ENCODE measurements at regions of chr12 and their contacts with region 1.

Region 1: GRCh38 chr12:49707128-49707811 is at the start of gene FMNL3:
- DNase-seq: peak; percentile 98
- ATAC-seq: peak; percentile 97
- H3K4me3 Mint-ChIP-seq: peak within 1 kb of the TSS; percentile 89
- H3K27ac Mint-ChIP-seq: peak within 1 kb of the TSS; percentile 80
- H3K4me1 Mint-ChIP-seq: peaks cover 43% of the 10 kb centered on the region
- H3K27me3 Mint-ChIP-seq: peaks cover 27% of the 10 kb centered on the region
- total RNA-seq, gene FMNL3: 44.2 to 50.5 TPM

Region 2: DNA sequence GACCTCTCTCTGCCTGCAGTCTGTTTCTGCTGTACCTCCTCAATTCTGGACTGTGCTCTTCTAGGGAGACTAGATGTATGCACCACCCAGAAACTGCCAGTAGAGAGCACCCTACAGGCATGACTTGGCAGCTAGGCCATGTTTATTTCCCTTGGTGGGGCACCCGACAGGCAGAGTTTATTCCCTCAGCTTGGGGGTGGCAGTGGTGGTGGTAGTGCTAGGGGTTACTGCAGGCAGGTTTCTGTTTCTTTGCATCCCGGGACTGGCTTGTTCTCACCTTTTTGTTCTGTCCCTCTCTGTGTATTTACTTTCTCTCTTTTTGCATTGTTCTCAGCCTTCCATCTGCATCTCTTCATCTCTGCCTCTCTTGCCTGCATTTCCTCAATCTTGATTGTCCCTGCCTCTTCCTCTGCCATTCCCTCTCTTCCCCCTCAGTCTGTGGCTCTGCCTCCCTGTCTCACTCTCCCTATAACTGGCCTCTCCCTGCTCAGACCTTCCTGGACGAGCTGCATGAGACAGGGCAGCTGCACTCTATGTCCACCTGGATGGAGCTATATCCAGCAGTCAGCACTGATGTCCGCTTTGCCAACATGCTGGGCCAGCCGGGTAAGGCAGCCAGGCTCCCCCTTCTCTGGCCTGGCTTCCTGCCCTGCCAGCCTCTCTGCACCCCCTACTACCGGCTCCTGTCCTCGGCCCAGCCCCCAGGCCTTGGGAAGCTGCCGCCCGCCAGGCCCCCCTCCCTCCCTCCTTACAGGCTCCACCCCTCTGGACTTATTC is 70.1 kb before region 1 on chr12:
- CTCF ChIA-PET with region 1: interaction called, 185 read pairs
- DNase-seq: peak; percentile 79
- ATAC-seq: peak; percentile 91
- H3K4me3 Mint-ChIP-seq: no peak overlapping the region
- H3K27ac Mint-ChIP-seq: no peak overlapping the region
- H3K4me1 Mint-ChIP-seq: peaks cover 19% of the 10 kb centered on the region
- H3K27me3 Mint-ChIP-seq: no peaks in the 10 kb centered on the region

Region 3: DNA sequence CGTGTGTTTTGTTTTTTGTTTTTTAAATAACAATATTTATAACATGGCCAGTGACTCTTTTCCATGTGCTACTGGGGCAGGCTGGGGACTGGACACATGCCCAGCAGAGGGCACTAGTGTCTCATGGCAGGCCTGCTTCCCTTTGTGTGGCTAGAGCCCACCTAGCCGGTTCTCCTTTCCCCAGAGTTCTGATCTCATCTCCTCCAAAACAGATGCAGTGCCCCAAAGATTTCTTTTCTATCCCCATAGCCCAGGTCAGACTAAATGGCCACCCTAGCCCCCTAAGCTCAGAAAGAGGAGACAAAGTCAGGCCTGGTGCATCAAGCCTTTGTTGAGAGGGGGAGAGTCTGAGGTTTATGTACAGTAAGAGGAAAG is 62.7 kb before region 1 on chr12:
- CTCF ChIA-PET with region 1: interaction called, 185 read pairs
- DNase-seq: peak; percentile 88
- ATAC-seq: peak; percentile 96
- H3K4me3 Mint-ChIP-seq: no peak overlapping the region
- H3K27ac Mint-ChIP-seq: peak overlapping the region; percentile 80
- H3K4me1 Mint-ChIP-seq: peaks cover 14% of the 10 kb centered on the region
- H3K27me3 Mint-ChIP-seq: no peaks in the 10 kb centered on the region

Region 4: DNA sequence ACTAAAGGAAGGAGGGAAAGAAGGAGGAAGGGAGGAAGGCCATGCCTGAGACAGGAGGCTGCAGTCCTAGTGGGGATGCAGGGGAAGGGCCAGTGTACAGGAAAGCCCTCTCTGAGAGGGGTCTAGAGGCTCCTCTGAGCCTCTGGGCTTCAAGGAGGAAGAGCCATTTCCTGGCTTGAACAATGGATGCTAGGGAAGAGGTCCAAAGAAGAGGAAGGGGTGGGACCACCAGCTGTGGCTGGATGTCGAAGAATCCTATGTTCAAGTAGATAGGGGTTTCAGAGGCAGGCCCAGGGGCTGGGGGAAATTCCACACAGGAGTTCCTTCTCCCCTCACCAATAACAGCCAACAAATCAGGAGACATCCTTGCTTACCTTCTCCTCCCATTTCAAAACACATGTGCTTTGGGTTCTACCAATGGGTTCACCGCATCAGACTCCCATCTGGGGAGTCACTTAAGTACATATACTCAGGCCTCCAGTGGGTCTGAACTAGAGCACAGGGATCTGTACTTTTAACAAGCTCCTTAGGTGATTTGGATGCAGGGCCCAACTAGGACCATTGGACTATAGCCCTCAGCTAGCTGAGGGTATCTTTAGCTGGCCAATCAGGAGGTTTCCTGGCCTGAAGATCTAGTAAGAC is 51.6 kb before region 1 on chr12:
- CTCF ChIA-PET with region 1: interaction called, 53 read pairs
- DNase-seq: no peak
- ATAC-seq: no peak
- H3K4me3 Mint-ChIP-seq: no peak overlapping the region
- H3K27ac Mint-ChIP-seq: no peak overlapping the region
- H3K4me1 Mint-ChIP-seq: peaks cover 8% of the 10 kb centered on the region
- H3K27me3 Mint-ChIP-seq: no peaks in the 10 kb centered on the region

Region 5: DNA sequence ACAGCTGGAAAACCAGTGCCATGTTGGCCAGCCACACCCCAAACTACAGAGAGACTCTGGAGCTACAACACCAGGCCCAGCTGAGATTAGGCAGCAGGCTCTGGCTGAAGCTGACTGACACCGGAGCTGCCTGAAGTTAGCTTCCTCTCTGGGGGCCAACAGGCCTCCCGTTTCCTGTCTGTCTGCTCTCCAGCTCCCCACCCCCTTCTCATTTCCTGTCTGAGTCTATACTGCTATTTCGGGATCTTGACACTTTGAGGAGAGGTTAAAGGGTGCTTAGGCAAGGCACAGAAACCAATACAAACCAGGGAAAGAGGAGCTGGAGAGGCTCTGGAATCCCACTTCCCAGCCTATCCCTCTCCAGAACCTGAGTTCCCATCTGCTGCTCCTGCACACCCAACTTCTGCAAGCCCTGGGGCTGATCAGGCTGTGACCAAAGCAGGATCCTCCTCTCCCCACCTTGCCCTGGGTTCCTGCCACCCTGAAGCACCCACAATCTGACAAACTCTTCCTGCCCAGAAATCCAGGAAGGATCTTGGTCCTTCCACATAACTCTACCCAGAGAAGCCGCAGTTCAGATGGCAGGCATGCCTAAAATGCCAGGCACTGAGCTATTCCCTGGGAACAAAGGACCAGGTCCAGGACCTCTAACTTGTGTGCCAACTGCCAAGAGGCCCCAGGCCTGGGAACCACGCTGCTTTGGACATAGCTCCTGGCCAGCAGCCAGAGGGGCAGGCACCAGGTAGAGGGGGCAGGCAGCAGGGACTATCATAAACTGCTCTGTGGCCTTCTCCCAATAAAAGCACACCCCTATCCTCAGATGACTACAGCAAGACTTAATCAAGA is 44.0 kb before region 1 on chr12:
- CTCF ChIA-PET with region 1: interaction called, 53 read pairs
- DNase-seq: peak; percentile 90
- ATAC-seq: peak; percentile 98
- H3K4me3 Mint-ChIP-seq: peak overlapping the region; percentile 48
- H3K27ac Mint-ChIP-seq: peak overlapping the region; percentile 94
- H3K4me1 Mint-ChIP-seq: peaks cover 62% of the 10 kb centered on the region
- H3K27me3 Mint-ChIP-seq: no peaks in the 10 kb centered on the region

Region 6: GRCh38 chr12:49673446-49674317 is 33.6 kb before region 1 on chr12:
- CTCF ChIA-PET with region 1: interaction called, 28 read pairs
- DNase-seq: no peak
- ATAC-seq: no peak
- H3K4me3 Mint-ChIP-seq: no peak overlapping the region
- H3K27ac Mint-ChIP-seq: peak overlapping the region; percentile 75
- H3K4me1 Mint-ChIP-seq: peaks cover 70% of the 10 kb centered on the region
- H3K27me3 Mint-ChIP-seq: no peaks in the 10 kb centered on the region